ENCODE measurements at regions of chr11 and their contacts with region 1.

Region 1: GRCh38 chr11:32105871-32106560 is 15.1 kb downstream of the RCN1 start:
- DNase-seq: peak in 1 of 2 experiments; percentile 32
- H3K4me3 ChIP-seq: no peak overlapping the region
- H3K27ac ChIP-seq: no peak overlapping the region
- H3K4me1 ChIP-seq: peaks cover 26% of the 10 kb centered on the region
- H3K27me3 ChIP-seq: no peaks in the 10 kb centered on the region
- CTCF ChIP-seq: no peak

Region 2: GRCh38 chr11:31913985-31914384 is 192.0 kb before region 1 on chr11:
- CTCF ChIA-PET with region 1: no interaction called
- POLR2A ChIA-PET with region 1: no interaction called
- intact Hi-C with region 1: no loop called
- DNase-seq: no peak
- H3K4me3 ChIP-seq: no peak overlapping the region
- H3K27ac ChIP-seq: no peak overlapping the region
- H3K4me1 ChIP-seq: peaks cover 10% of the 10 kb centered on the region
- H3K27me3 ChIP-seq: no peaks in the 10 kb centered on the region
- CTCF ChIP-seq: no peak

Region 3: DNA sequence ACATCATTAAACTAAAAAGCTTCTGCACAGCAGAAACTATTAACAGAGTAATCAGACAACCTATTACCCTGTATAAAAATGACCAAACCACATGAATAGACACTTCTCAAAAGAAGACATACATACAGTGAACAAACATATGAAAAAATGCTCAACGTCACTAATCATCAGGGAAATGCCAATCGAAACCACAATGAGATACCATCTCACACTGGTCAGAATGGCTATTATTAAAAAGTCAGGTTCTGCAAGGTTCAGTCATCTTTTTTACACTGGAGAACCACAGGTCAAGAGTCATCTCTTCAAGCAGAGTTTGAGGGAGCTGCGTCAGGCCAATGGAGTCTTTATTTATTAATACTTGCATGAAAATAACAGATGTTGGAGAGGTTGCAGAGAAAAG is 25.3 kb after region 1 on chr11:
- CTCF ChIA-PET with region 1: no interaction called
- POLR2A ChIA-PET with region 1: no interaction called
- intact Hi-C with region 1: loop called (anchors 1 kb)
- DNase-seq: peak; percentile 14 to 89
- H3K4me3 ChIP-seq: no peak overlapping the region
- H3K27ac ChIP-seq: peak overlapping the region; percentile 7
- H3K4me1 ChIP-seq: peaks cover 18% of the 10 kb centered on the region
- H3K27me3 ChIP-seq: no peaks in the 10 kb centered on the region
- CTCF ChIP-seq: no peak

Measured in PC-9 (cell line).